HEK293 (cell line): ENCODE measurements at regions of chr22 and their contacts with region 1.

Region 1: GRCh38 chr22:33018232-33018864 is 39.8 kb downstream of the SYN3 start:
- H3K4me3 ChIP-seq: no peak overlapping the region
- H3K27ac ChIP-seq: no peak overlapping the region
- H3K4me1 ChIP-seq: peaks cover 6% of the 10 kb centered on the region; the same call in 1 of the 2 replicates
- CTCF ChIP-seq: peak; percentile 46; the same call in 1 of the 2 replicates

Region 2: GRCh38 chr22:32957200-32957803 is 61.0 kb before region 1 on chr22:
- CTCF ChIA-PET with region 1: no interaction called
- POLR2A ChIA-PET with region 1: no interaction called
- H3K4me3 ChIP-seq: no peak overlapping the region
- H3K27ac ChIP-seq: no peak overlapping the region
- H3K4me1 ChIP-seq: no peaks in the 10 kb centered on the region
- CTCF ChIP-seq: no peak

Region 3: GRCh38 chr22:33000342-33001280 is 17.7 kb before region 1 on chr22:
- CTCF ChIA-PET with region 1: interaction called, 48 read pairs
- POLR2A ChIA-PET with region 1: no interaction called
- H3K4me3 ChIP-seq: no peak overlapping the region
- H3K27ac ChIP-seq: no peak overlapping the region
- H3K4me1 ChIP-seq: no peaks in the 10 kb centered on the region
- CTCF ChIP-seq: peak; percentile 76

Region 4: GRCh38 chr22:33038131-33038772 is 19.9 kb after region 1 on chr22:
- CTCF ChIA-PET with region 1: interaction called, 271 read pairs
- POLR2A ChIA-PET with region 1: no interaction called
- H3K4me3 ChIP-seq: no peak overlapping the region
- H3K27ac ChIP-seq: no peak overlapping the region
- H3K4me1 ChIP-seq: no peaks in the 10 kb centered on the region
- CTCF ChIP-seq: no peak

Region 5: GRCh38 chr22:33126881-33127280 is 108.5 kb after region 1 on chr22:
- CTCF ChIA-PET with region 1: interaction called, 28 read pairs
- POLR2A ChIA-PET with region 1: no interaction called
- H3K4me3 ChIP-seq: no peak overlapping the region
- H3K27ac ChIP-seq: no peak overlapping the region
- H3K4me1 ChIP-seq: no peaks in the 10 kb centered on the region
- CTCF ChIP-seq: no peak

Region 6: DNA sequence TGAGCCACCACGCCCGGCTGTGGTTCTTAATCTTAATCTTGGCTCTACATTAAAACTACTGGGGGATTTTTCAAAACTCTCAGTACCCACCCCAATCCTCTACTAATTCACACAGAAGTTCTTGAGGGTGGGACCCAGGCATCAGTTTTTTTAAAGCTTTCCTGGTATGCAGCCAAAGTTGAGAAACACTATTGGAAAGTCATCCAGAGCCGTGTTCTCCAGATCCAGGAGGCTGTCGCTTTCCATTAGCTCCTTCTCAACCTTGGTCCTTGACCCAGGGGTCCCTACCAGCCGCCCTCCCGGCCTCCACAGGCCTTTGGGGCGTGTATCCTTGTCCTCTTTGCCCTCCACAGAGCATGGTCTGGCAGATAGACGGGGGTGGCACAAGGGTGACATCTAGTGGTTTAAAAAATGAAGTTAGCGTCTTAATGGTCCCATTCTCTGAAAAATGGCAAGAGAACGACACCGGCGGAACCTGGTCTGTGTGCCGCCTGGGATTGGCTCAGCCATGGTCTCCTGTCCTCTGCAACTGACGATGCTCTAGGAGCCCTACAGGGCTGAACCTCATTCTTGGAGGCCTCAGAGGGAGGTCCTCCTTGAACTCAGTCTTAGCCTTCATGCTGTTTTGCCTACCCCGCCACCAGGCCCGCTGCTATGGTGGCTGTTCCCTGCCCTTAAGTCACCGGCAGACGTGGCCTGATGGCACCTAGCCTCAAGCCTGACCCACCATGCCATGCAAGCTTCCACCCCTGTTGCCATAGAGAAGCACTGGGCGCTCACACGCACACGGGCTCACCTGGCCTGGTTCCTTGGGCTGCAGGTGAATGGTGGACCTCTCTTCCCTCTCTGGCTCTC is 191.8 kb after region 1 on chr22:
- CTCF ChIA-PET with region 1: interaction called, 33 read pairs
- POLR2A ChIA-PET with region 1: no interaction called
- H3K4me3 ChIP-seq: no peak overlapping the region
- H3K27ac ChIP-seq: no peak overlapping the region
- H3K4me1 ChIP-seq: no peaks in the 10 kb centered on the region
- CTCF ChIP-seq: peak; percentile 53; the same call in 1 of the 2 replicates